ENCODE measurements at regions of chr21 and their contacts with region 1.

Region 1: GRCh38 chr21:29195981-29196669 is 65.7 kb downstream of the MAP3K7CL start:
- DNase-seq: peak; percentile 77
- H3K4me3 Mint-ChIP-seq: peak overlapping the region; percentile 80
- H3K27ac Mint-ChIP-seq: peak overlapping the region; percentile 88
- H3K4me1 Mint-ChIP-seq: peaks cover 44% of the 10 kb centered on the region
- H3K27me3 Mint-ChIP-seq: peaks cover 2% of the 10 kb centered on the region

Region 2: DNA sequence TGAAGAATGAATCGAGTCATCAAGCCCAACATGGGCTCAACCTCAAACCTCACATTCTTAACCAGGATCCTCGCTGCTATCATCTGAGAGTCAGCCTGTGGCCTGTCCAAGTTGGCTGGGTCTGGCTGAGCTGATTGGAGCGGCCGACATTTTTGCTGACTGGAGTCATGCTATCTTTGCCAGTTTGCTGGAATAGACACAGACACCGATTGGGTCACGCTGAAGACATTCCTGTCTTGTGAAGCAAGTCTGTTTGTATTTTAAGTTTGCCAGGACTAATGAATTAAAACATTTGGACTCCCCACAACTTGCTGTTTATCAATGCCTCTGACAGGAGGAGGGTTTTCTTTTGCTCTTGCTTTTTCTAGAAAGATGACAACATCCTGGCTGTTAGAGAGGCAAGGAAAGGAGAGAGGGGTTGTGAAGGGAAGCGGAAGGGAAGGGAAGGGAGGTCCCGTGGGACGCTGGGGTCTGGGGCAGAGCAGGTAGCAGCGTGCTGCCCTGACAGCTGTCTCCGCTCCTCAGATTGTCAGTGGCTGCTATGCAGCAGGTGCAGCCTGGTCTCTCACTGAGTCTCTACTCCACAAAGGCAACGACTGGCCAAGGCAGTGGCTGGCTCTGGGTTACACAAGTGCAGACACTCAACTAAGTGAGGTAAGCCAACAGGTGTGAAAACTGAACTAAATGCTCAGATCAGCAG is 65.7 kb before region 1 on chr21 and contains the start of gene MAP3K7CL:
- intact Hi-C with region 1: no loop called
- DNase-seq: no peak
- H3K4me3 Mint-ChIP-seq: no peak within 1 kb of the TSS
- H3K27ac Mint-ChIP-seq: no peak within 1 kb of the TSS
- H3K4me1 Mint-ChIP-seq: peaks cover 5% of the 10 kb centered on the region
- H3K27me3 Mint-ChIP-seq: no peaks in the 10 kb centered on the region
- total RNA-seq, gene MAP3K7CL: 3.8 and 4.2 TPM in 2 replicates

Region 3: GRCh38 chr21:29145354-29145782 is 50.8 kb before region 1 on chr21:
- intact Hi-C with region 1: loop called (anchors 5 kb)
- DNase-seq: no peak
- H3K4me3 Mint-ChIP-seq: no peak overlapping the region
- H3K27ac Mint-ChIP-seq: no peak overlapping the region
- H3K4me1 Mint-ChIP-seq: peaks cover 24% of the 10 kb centered on the region
- H3K27me3 Mint-ChIP-seq: no peaks in the 10 kb centered on the region

Region 4: DNA sequence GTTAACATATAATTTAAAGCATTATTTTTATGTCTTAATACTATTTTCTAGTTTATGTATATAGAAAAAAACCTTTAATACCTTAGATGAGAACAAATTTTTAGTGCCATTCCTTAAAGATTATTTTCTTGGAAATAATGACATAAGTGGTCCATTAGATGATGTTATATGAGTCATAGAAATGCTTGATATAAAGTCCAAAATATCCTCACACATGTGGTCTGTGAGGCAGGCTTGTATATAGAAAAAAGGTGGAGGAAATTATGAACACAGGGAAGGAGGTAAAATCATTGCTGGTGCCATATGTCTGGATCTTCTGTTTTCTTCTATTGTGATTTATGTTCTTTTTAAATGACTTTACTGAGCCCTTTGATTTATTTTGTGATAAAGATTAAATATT is 13.6 kb after region 1 on chr21:
- intact Hi-C with region 1: loop called (anchors 2 kb)
- DNase-seq: no peak
- H3K4me3 Mint-ChIP-seq: no peak overlapping the region
- H3K27ac Mint-ChIP-seq: no peak overlapping the region
- H3K4me1 Mint-ChIP-seq: peaks cover 15% of the 10 kb centered on the region
- H3K27me3 Mint-ChIP-seq: no peaks in the 10 kb centered on the region

Region 5: DNA sequence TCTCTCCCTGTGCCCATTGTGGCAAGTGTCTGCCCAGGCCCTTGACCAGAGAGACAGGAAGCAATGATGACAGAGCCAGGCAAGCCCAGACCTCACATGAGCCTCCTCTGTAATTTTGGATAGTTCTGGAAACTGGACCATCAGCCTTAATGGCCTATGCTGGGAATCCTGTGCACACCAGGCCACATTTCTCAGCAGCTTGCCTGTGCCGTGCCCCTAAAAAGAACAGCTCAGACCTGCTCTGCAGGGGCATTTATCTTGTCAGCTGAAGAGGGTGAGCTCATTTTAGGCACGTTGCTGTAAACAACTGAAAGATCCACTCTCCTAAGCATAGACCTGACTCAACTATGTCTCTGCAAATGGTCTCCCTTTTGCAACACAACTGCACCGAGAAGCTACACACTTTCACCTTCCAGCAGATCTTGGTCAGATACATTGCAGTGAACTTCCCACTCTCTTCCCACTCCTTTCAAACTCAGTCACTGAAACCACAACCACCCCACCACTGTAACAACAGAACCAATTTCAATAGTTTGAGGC is 49.0 kb after region 1 on chr21:
- intact Hi-C with region 1: loop called (anchors 1 kb)
- DNase-seq: no peak
- H3K4me3 Mint-ChIP-seq: no peak overlapping the region
- H3K27ac Mint-ChIP-seq: peak overlapping the region; percentile 49
- H3K4me1 Mint-ChIP-seq: peaks cover 9% of the 10 kb centered on the region
- H3K27me3 Mint-ChIP-seq: peaks cover 36% of the 10 kb centered on the region

Region 6: GRCh38 chr21:29372063-29372802 is 176.1 kb after region 1 on chr21:
- intact Hi-C with region 1: loop called (anchors 1 kb)
- DNase-seq: peak; percentile 39
- H3K4me3 Mint-ChIP-seq: no peak overlapping the region
- H3K27ac Mint-ChIP-seq: no peak overlapping the region
- H3K4me1 Mint-ChIP-seq: peaks cover 30% of the 10 kb centered on the region
- H3K27me3 Mint-ChIP-seq: no peaks in the 10 kb centered on the region

Region 7: DNA sequence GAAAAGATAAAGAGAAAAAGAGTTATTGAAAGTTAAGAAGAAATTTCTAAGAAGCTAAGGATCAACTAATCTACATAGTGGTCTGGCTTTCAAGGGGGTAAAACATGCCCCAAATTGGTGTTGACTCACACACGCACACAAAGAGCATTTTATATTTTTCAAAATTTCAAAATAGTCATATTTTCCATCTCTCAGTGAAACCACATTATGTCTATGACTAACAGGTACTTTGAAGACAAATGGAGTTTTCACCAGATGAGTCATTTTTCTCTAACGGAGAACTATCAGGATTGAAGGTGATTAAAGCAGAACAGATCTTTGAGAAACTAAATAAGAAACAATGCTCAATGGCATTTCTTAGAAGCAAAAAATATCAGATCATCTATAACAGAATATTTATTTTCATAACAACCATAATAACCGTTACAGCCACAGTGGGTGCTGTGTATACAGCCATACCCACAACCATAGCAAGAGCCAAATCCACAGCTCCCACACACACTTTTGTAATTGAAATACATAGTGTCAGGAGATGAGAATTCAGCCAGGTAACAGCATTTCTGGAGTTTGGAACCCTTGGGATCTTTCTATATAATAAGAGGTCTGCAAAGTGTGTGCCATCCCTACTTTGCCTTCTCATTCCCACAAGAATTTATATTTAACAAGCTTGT is 1522.2 kb after region 1 on chr21 and contains the start of gene KRTAP21-3:
- intact Hi-C with region 1: loop called (anchors 5 kb)
- DNase-seq: no peak
- H3K4me3 Mint-ChIP-seq: peak within 1 kb of the TSS; percentile 7
- H3K27ac Mint-ChIP-seq: peak within 1 kb of the TSS; percentile 75
- H3K4me1 Mint-ChIP-seq: peaks cover 29% of the 10 kb centered on the region
- H3K27me3 Mint-ChIP-seq: peaks cover 2% of the 10 kb centered on the region
- total RNA-seq, gene KRTAP21-3: not detected in 2 replicates